CD8-positive, alpha-beta T cell (primary cell): ENCODE measurements at regions of chr13 and their contacts with region 1.

Region 1: DNA sequence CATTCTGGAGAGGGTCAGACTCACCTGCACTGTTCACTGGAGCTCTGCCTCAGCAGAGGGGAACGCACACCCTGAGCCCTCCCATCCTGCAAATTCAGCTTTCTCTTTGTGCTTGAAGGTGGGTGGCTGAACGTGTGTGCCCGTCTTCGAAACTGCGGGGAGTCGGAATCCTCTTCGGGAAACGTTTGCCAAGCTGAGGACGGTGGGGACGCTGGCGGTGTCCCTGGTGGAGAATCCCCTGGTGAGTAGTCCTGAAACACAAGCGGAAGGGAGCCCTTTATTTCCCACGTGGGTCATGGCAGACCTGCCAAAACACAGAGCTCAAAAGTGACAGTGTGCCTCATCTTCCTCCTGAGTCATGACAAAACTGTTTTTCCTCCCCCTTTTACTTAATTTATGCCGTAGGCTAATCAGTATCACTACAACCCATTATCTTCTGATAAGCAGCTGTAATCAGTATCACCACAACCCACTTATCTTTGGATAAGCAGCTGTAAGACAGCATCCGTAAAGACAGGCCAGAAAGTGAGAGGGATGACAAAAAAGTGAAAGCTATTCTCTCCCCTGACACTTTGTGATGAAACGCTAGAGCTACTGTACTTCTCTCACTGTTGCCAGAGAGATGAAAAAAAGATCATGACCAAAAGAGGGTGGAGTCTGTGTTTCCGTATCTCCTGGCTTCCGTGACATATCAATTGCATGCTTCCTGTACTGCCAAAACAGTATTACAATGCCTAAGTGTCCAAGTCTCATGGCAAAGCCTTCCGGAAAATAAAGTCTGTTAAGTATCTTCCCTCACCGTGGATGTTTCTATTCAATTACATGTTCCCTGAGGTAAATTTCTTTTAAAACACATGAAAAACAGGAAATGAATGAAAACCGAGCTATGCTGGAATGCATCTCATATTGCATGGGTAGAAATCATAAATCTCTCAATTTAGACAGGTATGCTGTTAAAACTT is 155.5 kb downstream of the TBC1D4 start:
- DNase-seq: peak in 8 of 9 experiments; percentile 21 to 88 (median 46)
- ATAC-seq: peak; percentile 90
- H3K4me3 ChIP-seq: peak overlapping the region; percentile 55 to 65
- H3K4me3 Mint-ChIP-seq: peak overlapping the region; percentile 90
- H3K27ac ChIP-seq: peak overlapping the region; percentile 85 to 93
- H3K27ac Mint-ChIP-seq: peak overlapping the region; percentile 98
- H3K4me1 ChIP-seq: peaks cover 28% of the 10 kb centered on the region
- H3K4me1 Mint-ChIP-seq: peaks cover 48% of the 10 kb centered on the region
- H3K27me3 ChIP-seq: no peaks in the 10 kb centered on the region
- H3K27me3 Mint-ChIP-seq: no peaks in the 10 kb centered on the region
- CTCF ChIP-seq: no peak

Region 2: DNA sequence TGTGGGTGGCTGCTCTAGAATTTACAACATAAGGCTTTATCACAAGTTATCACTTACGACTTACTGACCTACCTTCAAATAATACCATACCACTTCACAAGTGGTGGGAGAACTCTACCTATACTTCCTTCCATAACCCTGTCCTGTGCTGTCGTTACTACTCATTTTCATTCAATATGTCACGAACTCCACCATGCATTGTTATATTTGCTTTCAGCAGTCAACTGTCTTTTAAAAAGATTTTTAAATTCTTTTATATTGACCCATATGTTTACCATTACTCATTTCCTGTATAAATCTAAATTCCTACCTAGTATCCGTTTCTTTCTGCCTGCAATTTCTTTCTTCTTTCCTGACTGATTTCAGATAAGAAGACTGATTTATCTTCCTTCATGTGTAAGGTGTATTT is 1392.2 kb before region 1 on chr13:
- CTCF ChIA-PET with region 1: no interaction called
- POLR2A ChIA-PET with region 1: no interaction called
- intact Hi-C with region 1: loop called in 1 of 2 experiments (anchors 5 kb)
- DNase-seq: peak in 1 of 9 experiments; percentile 15
- ATAC-seq: peak; percentile 26
- H3K4me3 ChIP-seq: no peak overlapping the region
- H3K4me3 Mint-ChIP-seq: no peak overlapping the region
- H3K27ac ChIP-seq: peak overlapping the region in 1 of 2 experiments; percentile 8
- H3K27ac Mint-ChIP-seq: peak overlapping the region; percentile 66
- H3K4me1 ChIP-seq: peaks cover 19% of the 10 kb centered on the region
- H3K4me1 Mint-ChIP-seq: peaks cover 69% of the 10 kb centered on the region
- H3K27me3 ChIP-seq: no peaks in the 10 kb centered on the region
- H3K27me3 Mint-ChIP-seq: no peaks in the 10 kb centered on the region
- CTCF ChIP-seq: no peak

Region 3: DNA sequence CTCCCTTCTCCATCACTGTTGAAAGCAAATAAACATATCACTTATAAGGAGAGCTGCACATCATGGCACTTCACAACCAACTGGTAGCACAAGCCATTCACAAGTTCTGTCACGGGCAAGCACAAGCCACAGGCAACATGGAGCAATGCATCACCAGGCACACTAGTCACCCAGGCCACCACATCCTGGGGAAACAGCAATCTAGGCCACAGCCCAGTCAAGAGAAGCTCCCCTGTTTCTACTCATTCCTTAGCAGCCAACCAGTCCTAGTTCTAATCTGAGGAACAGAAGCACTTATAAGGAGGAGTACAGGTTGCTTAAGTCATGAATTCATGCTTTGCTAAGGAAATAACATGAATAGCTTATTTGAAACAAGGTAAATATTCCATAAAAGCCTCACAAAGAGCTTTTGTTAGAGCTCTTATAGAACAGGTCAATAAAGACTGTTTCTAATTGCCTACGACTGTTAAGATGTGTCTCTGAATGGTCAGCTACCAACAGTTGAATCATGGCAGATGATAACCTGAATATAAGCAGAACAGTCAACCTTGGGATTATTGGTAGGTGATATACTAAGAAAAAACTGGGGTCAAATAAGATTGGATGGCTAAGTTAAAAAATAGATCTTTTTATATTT is 13.5 kb before region 1 on chr13:
- CTCF ChIA-PET with region 1: no interaction called
- POLR2A ChIA-PET with region 1: interaction called, 25 read pairs
- intact Hi-C with region 1: loop called in 1 of 2 experiments (anchors 1 kb)
- DNase-seq: peak in 4 of 9 experiments; percentile 8 to 49 (median 12)
- ATAC-seq: no peak
- H3K4me3 ChIP-seq: no peak overlapping the region
- H3K4me3 Mint-ChIP-seq: no peak overlapping the region
- H3K27ac ChIP-seq: no peak overlapping the region
- H3K27ac Mint-ChIP-seq: no peak overlapping the region
- H3K4me1 ChIP-seq: peaks cover 19% of the 10 kb centered on the region
- H3K4me1 Mint-ChIP-seq: peaks cover 35% of the 10 kb centered on the region
- H3K27me3 ChIP-seq: no peaks in the 10 kb centered on the region
- H3K27me3 Mint-ChIP-seq: no peaks in the 10 kb centered on the region
- CTCF ChIP-seq: no peak

Region 4: DNA sequence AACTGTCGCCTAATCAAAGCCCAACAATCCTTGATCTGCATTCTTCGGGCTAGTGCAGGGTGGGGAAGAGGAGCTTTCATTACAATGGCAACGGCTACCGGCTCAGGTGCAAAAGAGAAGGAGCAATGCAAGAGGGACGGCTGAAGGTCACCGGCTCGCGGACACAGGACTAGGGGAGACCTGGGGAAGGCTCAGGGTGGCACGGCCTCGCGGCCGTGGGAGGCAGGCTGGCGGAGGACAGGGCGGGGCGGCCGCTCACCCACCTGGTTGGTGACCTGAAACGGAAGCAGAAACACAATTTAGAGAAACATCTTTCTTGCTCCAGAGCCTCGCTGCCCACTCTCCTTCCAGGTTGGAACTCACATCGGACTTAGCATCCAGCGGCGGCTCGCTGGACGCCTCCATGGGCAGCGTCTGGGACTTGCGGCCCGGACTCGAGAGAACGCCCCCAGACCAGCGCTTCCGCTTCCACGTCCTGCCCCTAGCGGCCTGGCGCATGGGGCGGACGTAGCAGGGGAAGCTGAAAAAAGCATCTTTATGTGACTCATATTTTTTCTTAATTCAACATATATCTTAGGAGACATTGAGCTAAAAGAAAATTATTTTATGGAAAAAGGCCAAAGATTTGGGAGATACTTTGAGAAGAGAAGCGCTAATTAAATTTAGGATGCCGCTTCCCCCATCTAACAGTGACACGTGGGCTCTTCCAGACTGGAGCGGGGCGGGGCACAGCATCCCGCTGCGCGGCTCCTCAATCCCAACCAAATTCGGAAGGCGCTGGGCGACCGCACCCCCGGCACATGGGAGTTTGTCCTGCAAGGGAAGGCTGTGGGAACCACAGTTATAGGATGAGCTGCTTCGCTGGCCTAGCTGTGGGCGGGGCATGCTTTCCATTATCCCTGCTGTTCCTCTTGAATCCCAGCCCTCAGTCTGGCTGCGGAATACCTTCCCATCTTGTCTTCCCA is 211.2 kb after region 1 on chr13 and contains the start of gene COMMD6:
- CTCF ChIA-PET with region 1: no interaction called
- POLR2A ChIA-PET with region 1: interaction called, 9 read pairs
- intact Hi-C with region 1: loop called in 1 of 2 experiments (anchors 5 kb)
- DNase-seq: peak; percentile 34 to 86 (median 68)
- ATAC-seq: peak; percentile 94
- H3K4me3 ChIP-seq: peak within 1 kb of the TSS; percentile 71 to 87
- H3K4me3 Mint-ChIP-seq: peak within 1 kb of the TSS; percentile 98
- H3K27ac ChIP-seq: peak within 1 kb of the TSS; percentile 43 to 71
- H3K27ac Mint-ChIP-seq: peak within 1 kb of the TSS; percentile 96
- H3K4me1 ChIP-seq: peaks cover 14% of the 10 kb centered on the region
- H3K4me1 Mint-ChIP-seq: peaks cover 46% of the 10 kb centered on the region
- H3K27me3 ChIP-seq: no peaks in the 10 kb centered on the region
- H3K27me3 Mint-ChIP-seq: no peaks in the 10 kb centered on the region
- CTCF ChIP-seq: no peak
- total RNA-seq, gene COMMD6: 191 to 204 TPM

Region 5: GRCh38 chr13:76792731-76793347 is 1466.4 kb after region 1 on chr13:
- CTCF ChIA-PET with region 1: no interaction called
- POLR2A ChIA-PET with region 1: no interaction called
- intact Hi-C with region 1: no loop called
- DNase-seq: no peak
- ATAC-seq: no peak
- H3K4me3 ChIP-seq: no peak overlapping the region
- H3K4me3 Mint-ChIP-seq: no peak overlapping the region
- H3K27ac ChIP-seq: no peak overlapping the region
- H3K27ac Mint-ChIP-seq: no peak overlapping the region
- H3K4me1 ChIP-seq: no peaks in the 10 kb centered on the region
- H3K4me1 Mint-ChIP-seq: no peaks in the 10 kb centered on the region
- H3K27me3 ChIP-seq: no peaks in the 10 kb centered on the region
- H3K27me3 Mint-ChIP-seq: peaks cover 3% of the 10 kb centered on the region
- CTCF ChIP-seq: no peak

Region 6: GRCh38 chr13:76991796-76992547 is 1665.5 kb after region 1 on chr13 and contains the start of gene CLN5:
- CTCF ChIA-PET with region 1: no interaction called
- POLR2A ChIA-PET with region 1: interaction called, 3 read pairs
- intact Hi-C with region 1: loop called in 1 of 2 experiments (anchors 10 kb)
- DNase-seq: peak; percentile 91 to 98 (median 94)
- ATAC-seq: peak; percentile 83
- H3K4me3 ChIP-seq: peak within 1 kb of the TSS; percentile 72 to 86
- H3K4me3 Mint-ChIP-seq: peak within 1 kb of the TSS; percentile 95
- H3K27ac ChIP-seq: peak within 1 kb of the TSS; percentile 84 to 97
- H3K27ac Mint-ChIP-seq: peak within 1 kb of the TSS; percentile 99
- H3K4me1 ChIP-seq: peaks cover 31% of the 10 kb centered on the region
- H3K4me1 Mint-ChIP-seq: peaks cover 53% of the 10 kb centered on the region
- H3K27me3 ChIP-seq: peaks cover 0 to 13% of the 10 kb centered on the region in 2 experiments
- H3K27me3 Mint-ChIP-seq: peaks cover 12% of the 10 kb centered on the region
- CTCF ChIP-seq: no peak
- total RNA-seq, gene CLN5: 23.3 to 23.4 TPM